Activated CD8-positive, alpha-beta T cell treated with anti-CD3 and anti-CD28 coated beads, Interleukin-2, amount 10 ng/mL, durations not matched to agents 7 days and 5 days (primary cell): ENCODE measurements at regions of chr1 and their contacts with region 1.

Region 1: DNA sequence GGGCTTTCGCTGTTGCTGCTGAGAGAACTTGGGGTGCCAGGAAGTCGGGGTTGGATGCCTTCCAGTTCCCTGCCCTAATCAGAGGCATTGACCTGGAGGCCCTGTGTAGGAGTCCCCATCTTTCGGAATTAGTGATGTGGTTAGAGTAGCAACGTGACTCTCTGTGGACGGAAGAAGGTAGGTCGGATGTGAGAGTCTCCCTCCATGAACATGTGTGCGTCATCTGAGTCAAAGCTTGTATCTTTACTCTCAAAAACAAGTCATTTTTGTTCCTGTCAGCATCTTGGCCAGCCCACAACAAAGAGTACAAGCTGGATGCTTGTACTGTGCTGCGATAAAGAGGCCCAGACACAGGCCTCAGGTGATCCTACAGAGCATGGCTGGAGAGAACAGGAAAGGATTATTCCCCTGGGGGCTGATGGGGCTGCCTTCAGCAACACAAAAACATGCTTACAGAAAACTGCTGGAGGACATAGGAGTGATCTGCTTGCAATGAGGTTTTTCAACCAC is 31.0 kb upstream of the IL10 start:
- DNase-seq: peak; percentile 91
- ATAC-seq: peak; percentile 98
- H3K4me3 Mint-ChIP-seq: peak overlapping the region; percentile 1
- H3K27ac Mint-ChIP-seq: peak overlapping the region; percentile 83
- H3K4me1 Mint-ChIP-seq: peaks cover 70% of the 10 kb centered on the region
- H3K27me3 Mint-ChIP-seq: peaks cover 24% of the 10 kb centered on the region

Region 2: GRCh38 chr1:206766251-206766856 is 36.9 kb before region 1 on chr1:
- CTCF ChIA-PET with region 1: interaction called, 53 read pairs
- POLR2A ChIA-PET with region 1: interaction called, 3 read pairs
- DNase-seq: peak; percentile 85
- ATAC-seq: peak; percentile 80
- H3K4me3 Mint-ChIP-seq: peak overlapping the region; percentile 61
- H3K27ac Mint-ChIP-seq: peak overlapping the region; percentile 68
- H3K4me1 Mint-ChIP-seq: peaks cover 70% of the 10 kb centered on the region
- H3K27me3 Mint-ChIP-seq: peaks cover 19% of the 10 kb centered on the region

Region 3: GRCh38 chr1:206772243-206772937 is 30.9 kb before region 1 on chr1 and contains the start of gene IL10:
- CTCF ChIA-PET with region 1: interaction called, 53 read pairs
- POLR2A ChIA-PET with region 1: interaction called, 3 read pairs
- DNase-seq: no peak
- ATAC-seq: no peak
- H3K4me3 Mint-ChIP-seq: no peak within 1 kb of the TSS
- H3K27ac Mint-ChIP-seq: peak within 1 kb of the TSS; percentile 67
- H3K4me1 Mint-ChIP-seq: peaks cover 67% of the 10 kb centered on the region
- H3K27me3 Mint-ChIP-seq: peaks cover 36% of the 10 kb centered on the region
- total RNA-seq, gene IL10: 0.32 TPM in 1 of 2 experiments, not detected in the other

Region 4: GRCh38 chr1:206784471-206784903 is 18.8 kb before region 1 on chr1:
- CTCF ChIA-PET with region 1: interaction called, 30 read pairs
- POLR2A ChIA-PET with region 1: interaction called, 4 read pairs
- DNase-seq: peak; percentile 94
- ATAC-seq: peak; percentile 84
- H3K4me3 Mint-ChIP-seq: peak overlapping the region; percentile 35
- H3K27ac Mint-ChIP-seq: peak overlapping the region; percentile 86
- H3K4me1 Mint-ChIP-seq: peaks cover 66% of the 10 kb centered on the region
- H3K27me3 Mint-ChIP-seq: peaks cover 15% of the 10 kb centered on the region

Region 5: DNA sequence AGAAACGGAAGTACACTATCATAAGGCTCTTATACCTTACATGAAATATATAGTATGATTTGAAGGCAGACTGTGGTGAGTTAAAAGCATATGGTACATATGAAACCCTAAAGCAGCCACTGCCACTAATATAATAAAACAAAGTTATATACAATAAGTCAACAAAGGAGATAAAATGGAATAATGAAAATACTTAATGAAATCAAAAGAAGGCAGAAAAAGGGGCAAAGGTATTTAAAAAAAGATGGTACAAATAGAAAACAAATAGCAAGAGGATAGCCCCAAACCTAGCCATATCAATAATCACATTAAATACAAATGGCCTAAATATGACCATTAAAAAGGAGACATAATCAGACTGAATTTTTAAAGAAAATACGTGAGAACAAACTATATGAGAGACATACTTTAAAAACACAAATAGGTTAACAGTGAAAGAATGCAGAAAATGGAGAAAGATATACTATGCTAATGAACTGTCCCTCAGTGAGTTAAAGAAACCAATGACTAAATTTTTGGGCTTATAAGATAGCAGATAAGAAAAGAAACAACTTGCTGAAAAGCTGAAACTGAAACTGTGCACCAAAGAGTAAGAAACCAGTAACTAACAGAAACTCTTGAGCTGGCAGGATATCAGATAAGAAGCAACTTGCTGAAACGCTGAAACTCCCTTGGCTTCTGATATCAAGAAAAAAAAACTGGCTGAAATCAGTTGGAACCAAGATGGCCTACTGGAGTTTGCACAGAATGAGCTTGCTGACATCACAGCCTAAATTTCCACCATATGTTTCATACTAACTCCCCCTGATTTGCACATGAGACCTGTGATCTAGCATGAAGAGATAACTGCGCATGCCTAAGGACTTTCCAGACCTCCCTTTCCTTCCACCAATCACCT is 13.4 kb after region 1 on chr1:
- CTCF ChIA-PET with region 1: interaction called, 51 read pairs
- POLR2A ChIA-PET with region 1: interaction called, 3 read pairs
- DNase-seq: peak; percentile 55
- ATAC-seq: peak; percentile 92
- H3K4me3 Mint-ChIP-seq: peak overlapping the region; percentile 13
- H3K27ac Mint-ChIP-seq: peak overlapping the region; percentile 89
- H3K4me1 Mint-ChIP-seq: peaks cover 44% of the 10 kb centered on the region
- H3K27me3 Mint-ChIP-seq: no peaks in the 10 kb centered on the region

Region 6: GRCh38 chr1:206918076-206918475 is 114.8 kb after region 1 on chr1:
- CTCF ChIA-PET with region 1: interaction called, 185 read pairs
- POLR2A ChIA-PET with region 1: interaction called, 4 read pairs
- DNase-seq: no peak
- ATAC-seq: no peak
- H3K4me3 Mint-ChIP-seq: peak overlapping the region; percentile 58
- H3K27ac Mint-ChIP-seq: peak overlapping the region; percentile 75
- H3K4me1 Mint-ChIP-seq: peaks cover 66% of the 10 kb centered on the region
- H3K27me3 Mint-ChIP-seq: no peaks in the 10 kb centered on the region